ENCODE measurements at regions of chr2 and their contacts with region 1.

Region 1: DNA sequence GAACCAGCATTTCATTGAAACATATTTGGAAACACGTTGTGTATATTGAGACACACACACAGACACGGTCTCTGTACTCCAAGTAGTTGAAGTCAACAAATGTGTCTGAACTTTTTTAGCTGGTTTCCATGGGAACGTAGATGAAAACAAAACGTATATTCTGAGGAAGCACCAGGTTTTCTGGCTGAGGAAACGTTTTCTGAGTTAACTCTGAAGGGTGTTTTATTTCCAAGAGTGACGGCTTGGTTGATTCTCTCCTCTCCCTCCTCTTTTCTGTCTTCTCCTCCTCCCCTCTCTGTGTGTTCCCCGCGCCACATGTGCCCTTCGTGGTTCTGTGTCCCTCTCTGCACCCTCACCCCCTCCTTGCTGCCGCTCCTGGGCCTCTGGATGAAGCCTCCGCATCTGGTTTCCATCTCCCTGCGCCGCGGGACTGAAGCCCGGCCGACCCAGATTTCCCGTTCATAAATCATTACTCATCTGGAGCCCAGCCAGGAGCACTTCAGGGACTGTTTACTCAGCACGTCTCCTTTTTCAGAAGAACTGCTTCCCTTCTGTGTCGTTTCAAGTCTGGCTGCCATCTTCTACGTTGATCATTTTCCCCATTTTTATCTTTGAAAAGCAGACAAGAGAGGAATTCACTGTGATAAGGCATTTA is 122.7 kb downstream of the COL6A3 start:
- DNase-seq: peak; percentile 99
- H3K4me3 ChIP-seq: peak overlapping the region in 2 of 3 experiments; percentile 15 to 36
- H3K27ac ChIP-seq: peak overlapping the region; percentile 95
- H3K4me1 ChIP-seq: peaks cover 35% of the 10 kb centered on the region
- H3K27me3 ChIP-seq: no peaks in the 10 kb centered on the region
- CTCF ChIP-seq: no peak
- POLR2A ChIP-seq: no peak

Region 2: GRCh38 chr2:236485519-236485918 is 805.7 kb before region 1 on chr2:
- CTCF ChIA-PET with region 1: no interaction called
- POLR2A ChIA-PET with region 1: no interaction called
- dilution Hi-C with region 1: no loop called
- intact Hi-C with region 1: no loop called
- DNase-seq: no peak
- H3K4me3 ChIP-seq: no peak overlapping the region
- H3K27ac ChIP-seq: no peak overlapping the region
- H3K4me1 ChIP-seq: no peaks in the 10 kb centered on the region
- H3K27me3 ChIP-seq: no peaks in the 10 kb centered on the region
- CTCF ChIP-seq: no peak
- POLR2A ChIP-seq: no peak

Region 3: DNA sequence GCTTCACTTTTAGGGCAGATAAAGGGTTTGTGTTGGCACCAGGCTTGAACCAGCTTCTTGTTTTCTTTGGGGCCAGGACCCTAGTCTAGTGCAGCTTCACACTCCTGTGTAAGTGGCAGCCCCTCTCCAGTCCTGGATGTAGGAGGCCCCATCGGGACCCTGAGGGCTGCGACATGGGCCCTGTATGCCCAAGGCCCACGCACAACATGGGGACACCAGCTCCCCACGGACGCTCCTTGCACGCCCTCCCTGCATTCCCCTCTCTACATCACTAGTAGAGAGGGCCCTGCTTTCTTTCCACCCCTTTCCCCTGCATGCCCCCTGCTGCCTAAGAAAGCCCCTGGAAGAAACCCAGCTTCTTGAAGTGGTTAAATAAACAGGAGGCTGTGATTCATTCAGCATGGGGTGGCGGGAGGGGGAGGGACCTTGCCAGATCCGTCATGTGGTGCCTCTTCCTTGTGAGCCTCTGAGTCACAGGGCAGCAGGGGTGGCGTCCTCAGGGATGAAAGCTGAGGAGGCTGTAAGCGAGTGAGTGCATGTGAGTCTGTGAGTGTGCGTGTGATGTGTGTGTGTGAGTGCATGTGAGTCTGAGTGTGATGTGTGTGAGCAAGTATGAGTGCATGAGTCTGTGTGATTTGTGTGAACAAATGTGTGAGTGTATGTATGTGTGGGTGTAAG is 163.1 kb before region 1 on chr2:
- CTCF ChIA-PET with region 1: no interaction called
- POLR2A ChIA-PET with region 1: no interaction called
- dilution Hi-C with region 1: no loop called
- intact Hi-C with region 1: loop called (anchors 1 kb)
- DNase-seq: peak; percentile 98
- H3K4me3 ChIP-seq: no peak overlapping the region
- H3K27ac ChIP-seq: peak overlapping the region; percentile 21
- H3K4me1 ChIP-seq: peaks cover 11% of the 10 kb centered on the region
- H3K27me3 ChIP-seq: no peaks in the 10 kb centered on the region
- CTCF ChIP-seq: peak; percentile 6 to 17
- POLR2A ChIP-seq: no peak

Region 4: DNA sequence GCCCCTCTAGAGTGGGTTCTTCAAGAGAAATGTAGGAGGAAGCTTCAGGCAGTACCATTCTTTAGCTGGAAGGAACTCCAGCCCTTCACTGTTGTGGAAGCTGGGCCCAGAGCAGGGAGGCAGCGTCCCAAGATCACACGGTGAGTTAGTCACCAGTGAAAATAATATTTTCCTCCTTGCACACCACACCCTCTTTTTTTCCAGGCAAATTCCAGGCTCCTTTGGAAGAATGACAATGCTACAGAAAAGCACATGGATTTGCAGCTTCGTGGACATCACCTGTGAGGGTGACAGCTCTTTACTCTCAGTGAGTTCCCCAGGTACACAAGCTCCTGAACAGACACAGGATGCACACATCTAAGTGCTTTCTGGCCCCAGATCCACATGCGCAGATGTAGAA is 34.4 kb before region 1 on chr2:
- CTCF ChIA-PET with region 1: no interaction called
- POLR2A ChIA-PET with region 1: interaction called, 3 read pairs
- dilution Hi-C with region 1: no loop called
- intact Hi-C with region 1: loop called (anchors 1 kb)
- DNase-seq: peak; percentile 69
- H3K4me3 ChIP-seq: no peak overlapping the region
- H3K27ac ChIP-seq: no peak overlapping the region
- H3K4me1 ChIP-seq: peaks cover 19% of the 10 kb centered on the region
- H3K27me3 ChIP-seq: peaks cover 0 to 5% of the 10 kb centered on the region in 2 experiments
- CTCF ChIP-seq: no peak
- POLR2A ChIP-seq: no peak

Region 5: GRCh38 chr2:237451643-237452469 is 160.6 kb after region 1 on chr2:
- CTCF ChIA-PET with region 1: no interaction called
- POLR2A ChIA-PET with region 1: no interaction called
- dilution Hi-C with region 1: no loop called
- intact Hi-C with region 1: loop called (anchors 1 kb)
- DNase-seq: no peak
- H3K4me3 ChIP-seq: no peak overlapping the region
- H3K27ac ChIP-seq: no peak overlapping the region
- H3K4me1 ChIP-seq: peaks cover 11% of the 10 kb centered on the region
- H3K27me3 ChIP-seq: peaks cover 63 to 72% of the 10 kb centered on the region in 2 experiments
- CTCF ChIP-seq: no peak
- POLR2A ChIP-seq: no peak

Region 6: GRCh38 chr2:237474931-237475703 is 183.9 kb after region 1 on chr2:
- CTCF ChIA-PET with region 1: interaction called, 3 read pairs
- POLR2A ChIA-PET with region 1: no interaction called
- dilution Hi-C with region 1: no loop called
- intact Hi-C with region 1: loop called (anchors 5 kb)
- DNase-seq: peak; percentile 54
- H3K4me3 ChIP-seq: peak overlapping the region; percentile 38 to 51 (median 40)
- H3K27ac ChIP-seq: peak overlapping the region; percentile 23
- H3K4me1 ChIP-seq: peaks cover 12% of the 10 kb centered on the region
- H3K27me3 ChIP-seq: peaks cover 36 to 42% of the 10 kb centered on the region in 2 experiments
- CTCF ChIP-seq: peak; percentile 73 to 93
- POLR2A ChIP-seq: peak; percentile 23

Region 7: DNA sequence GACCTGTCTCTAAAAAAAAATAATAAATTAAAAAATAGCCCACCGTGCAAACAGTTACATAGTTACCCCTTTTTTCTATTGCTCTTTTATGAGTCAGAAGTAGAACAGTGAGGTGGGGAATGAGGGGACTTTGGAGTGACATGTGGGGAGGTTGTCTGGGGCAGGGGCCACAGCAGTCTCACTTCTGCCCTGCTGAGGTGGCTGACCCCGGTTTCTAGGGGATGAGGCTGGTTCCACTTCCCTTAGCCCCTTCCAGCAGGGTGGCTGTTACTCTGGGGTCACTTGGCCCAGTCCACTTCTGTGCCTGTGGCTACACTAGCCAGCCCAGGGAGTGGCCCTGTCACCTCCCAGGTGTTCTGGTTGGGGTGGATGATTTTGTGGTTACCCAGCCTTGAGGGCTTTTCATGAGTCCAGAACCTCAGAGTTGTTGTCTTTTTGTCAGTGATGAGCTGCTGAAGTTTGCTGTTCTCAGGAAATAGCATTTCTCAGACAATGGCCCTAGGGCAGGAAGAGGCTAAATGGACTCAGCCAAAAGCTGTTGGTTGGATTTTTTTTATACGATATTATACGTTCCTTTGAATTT is 741.6 kb after region 1 on chr2:
- CTCF ChIA-PET with region 1: no interaction called
- POLR2A ChIA-PET with region 1: no interaction called
- dilution Hi-C with region 1: no loop called
- intact Hi-C with region 1: no loop called
- DNase-seq: no peak
- H3K4me3 ChIP-seq: no peak overlapping the region
- H3K27ac ChIP-seq: no peak overlapping the region
- H3K4me1 ChIP-seq: no peaks in the 10 kb centered on the region
- H3K27me3 ChIP-seq: no peaks in the 10 kb centered on the region
- CTCF ChIP-seq: no peak
- POLR2A ChIP-seq: no peak